Activated CD4-positive, alpha-beta T cell treated with anti-CD3 and anti-CD28 coated beads for 36 hours (primary cell): ENCODE measurements at regions of chr21 and their contacts with region 1.

Region 1: GRCh38 chr21:25396135-25396711 is 211.1 kb downstream of the MRPL39 start:
- DNase-seq: peak; percentile 89
- ATAC-seq: peak; percentile 98
- H3K4me3 Mint-ChIP-seq: peak overlapping the region; percentile 54
- H3K27ac Mint-ChIP-seq: peak overlapping the region; percentile 93
- H3K4me1 Mint-ChIP-seq: peaks cover 31% of the 10 kb centered on the region
- H3K27me3 Mint-ChIP-seq: no peaks in the 10 kb centered on the region

Region 2: GRCh38 chr21:25215698-25216384 is 180.4 kb before region 1 on chr21:
- CTCF ChIA-PET with region 1: no interaction called
- POLR2A ChIA-PET with region 1: no interaction called
- intact Hi-C with region 1: no loop called
- DNase-seq: no peak
- ATAC-seq: no peak
- H3K4me3 Mint-ChIP-seq: no peak overlapping the region
- H3K27ac Mint-ChIP-seq: no peak overlapping the region
- H3K4me1 Mint-ChIP-seq: no peaks in the 10 kb centered on the region
- H3K27me3 Mint-ChIP-seq: no peaks in the 10 kb centered on the region

Region 3: DNA sequence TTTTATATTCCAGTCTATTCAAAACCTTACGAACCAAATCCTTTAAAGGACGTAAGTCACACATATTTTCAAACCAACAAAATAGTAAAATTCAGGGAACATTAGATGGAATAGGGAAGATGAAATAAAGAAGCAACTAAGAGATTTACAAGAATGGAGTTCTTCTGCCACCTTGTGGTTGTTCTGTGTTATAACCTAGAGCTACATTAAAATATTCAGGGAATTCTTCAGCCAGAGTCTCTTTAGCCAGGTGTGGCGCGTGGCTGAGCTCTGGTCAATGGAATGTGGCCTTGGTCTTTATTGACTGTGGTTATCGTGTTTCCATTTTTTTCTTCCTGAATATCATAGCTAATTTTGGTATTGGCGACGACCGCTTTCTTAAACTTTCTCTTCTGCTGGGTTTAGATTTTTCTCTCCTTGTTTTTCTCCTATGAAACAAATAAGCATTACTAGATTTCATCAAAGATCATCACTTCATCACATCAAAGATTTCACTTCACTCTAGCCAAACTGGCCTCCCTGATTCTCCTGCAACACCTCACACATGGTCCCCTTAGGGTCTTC is 10.2 kb before region 1 on chr21:
- CTCF ChIA-PET with region 1: interaction called, 13 read pairs
- POLR2A ChIA-PET with region 1: no interaction called
- intact Hi-C with region 1: no loop called
- DNase-seq: no peak
- ATAC-seq: peak; percentile 49
- H3K4me3 Mint-ChIP-seq: no peak overlapping the region
- H3K27ac Mint-ChIP-seq: no peak overlapping the region
- H3K4me1 Mint-ChIP-seq: peaks cover 12% of the 10 kb centered on the region
- H3K27me3 Mint-ChIP-seq: peaks cover 5% of the 10 kb centered on the region

Region 4: DNA sequence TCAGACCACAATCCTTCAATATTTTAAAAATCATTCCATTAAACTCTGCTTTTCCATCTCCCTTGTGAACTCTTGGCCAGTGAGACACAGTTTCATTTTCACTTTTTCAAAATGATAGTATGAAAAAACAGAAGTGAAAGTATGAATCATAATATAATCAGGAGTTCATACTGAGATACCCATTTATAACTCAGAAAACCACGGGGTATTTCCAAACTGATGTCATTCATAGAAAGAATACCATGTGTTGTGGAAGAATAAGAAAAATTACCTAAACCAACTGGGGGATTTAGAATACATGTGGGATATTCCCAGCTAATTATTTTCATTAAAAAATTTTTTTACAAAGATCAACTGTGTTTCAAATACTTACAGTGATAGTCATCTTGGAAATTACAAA is 61.2 kb after region 1 on chr21:
- CTCF ChIA-PET with region 1: no interaction called
- POLR2A ChIA-PET with region 1: interaction called, 4 read pairs
- intact Hi-C with region 1: loop called (anchors 1 kb)
- DNase-seq: no peak
- ATAC-seq: peak; percentile 46
- H3K4me3 Mint-ChIP-seq: peak overlapping the region; percentile 67
- H3K27ac Mint-ChIP-seq: peak overlapping the region; percentile 89
- H3K4me1 Mint-ChIP-seq: peaks cover 83% of the 10 kb centered on the region
- H3K27me3 Mint-ChIP-seq: no peaks in the 10 kb centered on the region

Region 5: GRCh38 chr21:25501996-25502665 is 105.9 kb after region 1 on chr21:
- CTCF ChIA-PET with region 1: interaction called, 3 read pairs
- POLR2A ChIA-PET with region 1: no interaction called
- intact Hi-C with region 1: loop called (anchors 1 kb)
- DNase-seq: peak; percentile 83
- ATAC-seq: peak; percentile 87
- H3K4me3 Mint-ChIP-seq: peak overlapping the region; percentile 57
- H3K27ac Mint-ChIP-seq: peak overlapping the region; percentile 99
- H3K4me1 Mint-ChIP-seq: peaks cover 80% of the 10 kb centered on the region
- H3K27me3 Mint-ChIP-seq: no peaks in the 10 kb centered on the region

Region 6: DNA sequence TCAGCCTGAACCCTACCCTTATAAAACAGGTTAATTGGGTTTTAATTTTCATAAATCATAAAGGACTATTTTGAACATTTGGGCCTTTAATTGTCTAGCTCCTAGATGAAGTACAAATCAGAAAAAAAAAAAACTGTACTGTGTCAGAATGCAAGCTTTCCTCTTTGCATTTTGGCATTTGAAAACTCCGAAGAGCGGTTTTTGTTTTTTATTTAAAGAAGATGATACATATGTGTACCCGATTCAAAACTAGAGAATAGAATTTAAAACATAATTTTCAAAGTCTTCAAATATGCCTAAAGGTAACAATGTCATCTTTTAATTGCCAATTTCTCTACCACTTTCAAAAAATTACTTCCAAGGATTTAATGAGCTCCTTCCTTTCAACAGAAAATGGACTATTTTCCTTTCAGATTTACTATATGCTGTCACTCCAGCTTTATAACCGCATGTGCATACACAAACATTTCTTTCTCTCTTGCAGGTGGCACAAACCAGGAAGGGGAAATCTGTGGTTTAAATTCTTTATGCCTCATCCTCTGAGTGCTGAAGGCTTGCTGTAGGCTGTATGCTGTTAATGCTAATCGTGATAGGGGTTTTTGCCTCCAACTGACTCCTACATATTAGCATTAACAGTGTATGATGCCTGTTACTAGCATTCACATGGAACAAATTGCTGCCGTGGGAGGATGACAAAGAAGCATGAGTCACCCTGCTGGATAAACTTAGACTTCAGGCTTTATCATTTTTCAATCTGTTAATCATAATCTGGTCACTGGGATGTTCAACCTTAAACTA is 177.4 kb after region 1 on chr21:
- CTCF ChIA-PET with region 1: no interaction called
- POLR2A ChIA-PET with region 1: interaction called, 5 read pairs
- intact Hi-C with region 1: loop called (anchors 1 kb)
- DNase-seq: peak; percentile 83
- ATAC-seq: peak; percentile 34
- H3K4me3 Mint-ChIP-seq: peak overlapping the region; percentile 93
- H3K27ac Mint-ChIP-seq: peak overlapping the region; percentile 96
- H3K4me1 Mint-ChIP-seq: peaks cover 72% of the 10 kb centered on the region
- H3K27me3 Mint-ChIP-seq: no peaks in the 10 kb centered on the region

Region 7: GRCh38 chr21:25759573-25759972 is 363.4 kb after region 1 on chr21:
- CTCF ChIA-PET with region 1: no interaction called
- POLR2A ChIA-PET with region 1: no interaction called
- intact Hi-C with region 1: no loop called
- DNase-seq: no peak
- ATAC-seq: peak; percentile 44
- H3K4me3 Mint-ChIP-seq: no peak overlapping the region
- H3K27ac Mint-ChIP-seq: peak overlapping the region; percentile 63
- H3K4me1 Mint-ChIP-seq: peaks cover 26% of the 10 kb centered on the region
- H3K27me3 Mint-ChIP-seq: no peaks in the 10 kb centered on the region